Activated CD4-positive, alpha-beta memory T cell treated with anti-CD3 and anti-CD28 coated beads, Interleukin-2, amount 10 ng/mL, durations not matched to agents 7 days and 5 days (primary cell): ENCODE measurements at regions of chr10 and their contacts with region 1.

Region 1: DNA sequence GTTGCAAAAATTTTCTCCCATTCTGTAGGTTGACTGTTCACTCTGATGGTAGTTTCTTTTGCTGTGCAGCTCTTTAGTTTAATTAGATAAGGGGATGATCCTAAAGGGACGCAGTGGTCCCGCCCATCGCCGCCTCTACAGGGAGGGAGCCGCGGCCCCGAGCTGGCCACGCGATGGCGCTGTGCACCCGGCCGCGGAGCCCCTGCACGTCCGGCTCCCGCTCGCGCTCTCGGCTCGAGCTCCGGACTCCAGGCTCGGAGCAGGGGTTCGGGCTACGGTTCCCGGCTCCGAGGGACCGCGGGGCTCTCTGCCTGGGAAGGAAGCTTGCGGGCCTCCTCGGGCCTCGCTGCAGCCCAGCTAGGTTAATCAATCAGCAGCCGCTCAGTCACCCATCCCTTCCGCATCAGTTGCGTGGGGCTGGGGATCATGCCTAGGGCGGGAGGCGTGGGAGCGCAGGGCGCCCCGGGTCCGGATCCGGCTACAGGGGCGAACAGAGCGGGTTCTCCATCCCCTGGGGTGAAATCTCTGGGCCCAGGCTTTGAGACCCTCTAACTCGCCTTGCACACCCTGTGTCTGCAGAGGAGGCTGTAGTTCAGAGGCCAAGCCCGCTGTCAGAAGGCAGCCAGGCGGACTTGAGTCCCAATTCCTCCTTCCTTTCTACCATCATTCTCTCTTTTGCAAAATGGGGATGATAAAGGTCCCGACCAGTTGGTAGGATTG is 97.9 kb downstream of the WDR11 start:
- DNase-seq: peak; percentile 68
- H3K4me3 Mint-ChIP-seq: no peak overlapping the region
- H3K27ac Mint-ChIP-seq: no peak overlapping the region
- H3K4me1 Mint-ChIP-seq: peaks cover 7% of the 10 kb centered on the region
- H3K27me3 Mint-ChIP-seq: peaks cover 32% of the 10 kb centered on the region

Region 2: GRCh38 chr10:120926611-120927010 is 22.4 kb before region 1 on chr10:
- CTCF ChIA-PET with region 1: no interaction called
- POLR2A ChIA-PET with region 1: no interaction called
- DNase-seq: no peak
- H3K4me3 Mint-ChIP-seq: no peak overlapping the region
- H3K27ac Mint-ChIP-seq: no peak overlapping the region
- H3K4me1 Mint-ChIP-seq: no peaks in the 10 kb centered on the region
- H3K27me3 Mint-ChIP-seq: no peaks in the 10 kb centered on the region

Region 3: GRCh38 chr10:121027371-121027770 is 78.3 kb after region 1 on chr10:
- CTCF ChIA-PET with region 1: no interaction called
- POLR2A ChIA-PET with region 1: no interaction called
- DNase-seq: no peak
- H3K4me3 Mint-ChIP-seq: no peak overlapping the region
- H3K27ac Mint-ChIP-seq: no peak overlapping the region
- H3K4me1 Mint-ChIP-seq: no peaks in the 10 kb centered on the region
- H3K27me3 Mint-ChIP-seq: no peaks in the 10 kb centered on the region

Region 4: GRCh38 chr10:121608469-121609190 is 659.6 kb after region 1 on chr10:
- CTCF ChIA-PET with region 1: interaction called, 12 read pairs
- POLR2A ChIA-PET with region 1: no interaction called
- DNase-seq: peak; percentile 41
- H3K4me3 Mint-ChIP-seq: no peak overlapping the region
- H3K27ac Mint-ChIP-seq: no peak overlapping the region
- H3K4me1 Mint-ChIP-seq: no peaks in the 10 kb centered on the region
- H3K27me3 Mint-ChIP-seq: peaks cover 8% of the 10 kb centered on the region

Region 5: GRCh38 chr10:121886997-121887622 is 938.1 kb after region 1 on chr10:
- CTCF ChIA-PET with region 1: interaction called, 12 read pairs
- POLR2A ChIA-PET with region 1: no interaction called
- DNase-seq: peak; percentile 52
- H3K4me3 Mint-ChIP-seq: no peak overlapping the region
- H3K27ac Mint-ChIP-seq: no peak overlapping the region
- H3K4me1 Mint-ChIP-seq: no peaks in the 10 kb centered on the region
- H3K27me3 Mint-ChIP-seq: no peaks in the 10 kb centered on the region

Region 6: GRCh38 chr10:121900443-121901174 is 951.6 kb after region 1 on chr10:
- CTCF ChIA-PET with region 1: interaction called, 10 read pairs
- POLR2A ChIA-PET with region 1: no interaction called
- DNase-seq: no peak
- H3K4me3 Mint-ChIP-seq: no peak overlapping the region
- H3K27ac Mint-ChIP-seq: no peak overlapping the region
- H3K4me1 Mint-ChIP-seq: peaks cover 3% of the 10 kb centered on the region
- H3K27me3 Mint-ChIP-seq: no peaks in the 10 kb centered on the region